ENCODE measurements at regions of chr7 and their contacts with region 1.

Region 1: DNA sequence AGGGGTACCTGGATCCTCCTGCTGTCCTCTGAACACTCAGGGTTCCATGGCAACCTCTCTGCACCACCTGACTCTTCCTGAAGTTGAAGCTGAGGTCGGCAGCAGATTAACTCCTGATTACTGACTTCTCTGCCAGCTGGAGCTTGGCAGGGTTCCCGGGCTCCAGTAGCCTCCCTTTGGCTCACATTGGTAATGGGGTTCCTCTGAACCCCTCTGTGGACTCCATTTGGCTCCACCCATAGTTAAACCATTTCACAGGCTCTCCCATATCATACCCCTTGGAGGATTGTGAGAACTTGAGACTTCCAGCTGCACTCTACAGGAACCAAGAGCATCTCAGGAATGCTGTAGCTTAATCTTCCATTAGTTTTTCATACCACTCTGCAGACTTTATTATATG is 292.5 kb downstream of the HDAC9 start:
- DNase-seq: peak; percentile 77
- H3K4me3 ChIP-seq: no peak overlapping the region
- H3K27ac ChIP-seq: peak overlapping the region; percentile 32
- H3K4me1 ChIP-seq: peaks cover 5% of the 10 kb centered on the region
- H3K27me3 ChIP-seq: no peaks in the 10 kb centered on the region
- CTCF ChIP-seq: no peak

Region 2: DNA sequence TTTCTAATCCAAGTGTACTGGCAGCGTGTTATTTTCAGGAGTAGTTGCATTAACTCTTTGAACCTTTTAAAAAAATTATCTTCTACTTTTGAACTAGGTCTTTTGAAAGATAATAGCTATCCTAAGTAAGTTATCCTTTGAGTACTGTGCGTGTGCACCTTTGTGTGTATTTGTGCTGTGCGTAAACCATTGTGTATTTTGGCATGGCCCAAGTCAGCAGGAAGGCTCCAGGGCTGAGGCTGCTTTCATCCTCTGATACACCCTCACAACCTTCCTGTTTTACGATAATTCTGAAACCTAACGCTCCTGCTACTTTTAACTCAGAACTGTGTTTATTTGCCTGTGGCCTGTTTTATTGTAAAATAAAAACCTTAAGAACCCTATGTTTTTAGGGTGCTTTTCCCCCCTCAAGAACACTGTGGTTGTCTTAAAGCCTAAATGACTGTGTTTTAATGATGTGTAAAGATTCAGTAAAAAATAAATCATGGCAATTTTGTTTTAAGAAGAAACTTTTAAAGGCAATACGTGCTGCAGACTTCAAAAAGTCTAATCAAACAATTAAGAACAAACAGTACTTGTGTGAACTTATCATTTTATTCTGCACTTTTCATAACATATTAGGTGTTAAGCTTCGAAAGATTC is 235.0 kb before region 1 on chr7:
- CTCF ChIA-PET with region 1: no interaction called
- POLR2A ChIA-PET with region 1: no interaction called
- intact Hi-C with region 1: loop called (anchors 5 kb)
- DNase-seq: no peak
- H3K4me3 ChIP-seq: no peak overlapping the region
- H3K27ac ChIP-seq: peak overlapping the region; percentile 55
- H3K4me1 ChIP-seq: peaks cover 45% of the 10 kb centered on the region
- H3K27me3 ChIP-seq: no peaks in the 10 kb centered on the region
- CTCF ChIP-seq: no peak

Region 3: GRCh38 chr7:18614841-18615240 is 173.2 kb before region 1 on chr7:
- CTCF ChIA-PET with region 1: no interaction called
- POLR2A ChIA-PET with region 1: no interaction called
- intact Hi-C with region 1: no loop called
- DNase-seq: no peak
- H3K4me3 ChIP-seq: no peak overlapping the region
- H3K27ac ChIP-seq: no peak overlapping the region
- H3K4me1 ChIP-seq: peaks cover 4% of the 10 kb centered on the region
- H3K27me3 ChIP-seq: no peaks in the 10 kb centered on the region
- CTCF ChIP-seq: no peak

Region 4: DNA sequence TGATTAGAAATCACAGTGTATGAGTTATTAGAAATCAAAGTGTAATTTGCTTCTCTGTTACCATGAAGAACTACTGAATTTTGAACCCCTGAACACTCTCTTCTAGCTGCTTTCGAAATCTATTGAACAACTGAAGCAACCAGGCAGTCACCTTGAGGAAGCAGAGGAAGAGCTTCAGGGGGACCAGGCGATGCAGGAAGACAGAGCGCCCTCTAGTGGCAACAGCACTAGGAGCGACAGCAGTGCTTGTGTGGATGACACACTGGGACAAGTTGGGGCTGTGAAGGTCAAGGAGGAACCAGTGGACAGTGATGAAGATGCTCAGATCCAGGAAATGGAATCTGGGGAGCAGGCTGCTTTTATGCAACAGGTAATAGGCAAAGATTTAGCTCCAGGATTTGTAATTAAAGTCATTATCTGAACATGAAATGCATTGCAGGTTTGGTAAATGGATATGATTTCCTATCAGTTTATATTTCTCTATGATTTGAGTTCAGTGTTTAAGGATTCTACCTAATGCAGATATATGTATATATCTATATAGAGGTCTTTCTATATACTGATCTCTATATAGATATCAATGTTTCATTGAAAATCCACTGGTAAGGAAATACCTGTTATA is 121.8 kb before region 1 on chr7:
- CTCF ChIA-PET with region 1: no interaction called
- POLR2A ChIA-PET with region 1: no interaction called
- intact Hi-C with region 1: loop called (anchors 5 kb)
- DNase-seq: peak; percentile 87
- H3K4me3 ChIP-seq: no peak overlapping the region
- H3K27ac ChIP-seq: peak overlapping the region; percentile 73
- H3K4me1 ChIP-seq: peaks cover 42% of the 10 kb centered on the region
- H3K27me3 ChIP-seq: no peaks in the 10 kb centered on the region
- CTCF ChIP-seq: peak; percentile 99

Region 5: GRCh38 chr7:19107356-19108146 is 319.5 kb after region 1 on chr7:
- CTCF ChIA-PET with region 1: no interaction called
- POLR2A ChIA-PET with region 1: no interaction called
- intact Hi-C with region 1: loop called (anchors 5 kb)
- DNase-seq: peak; percentile 76
- H3K4me3 ChIP-seq: peak overlapping the region; percentile 43
- H3K27ac ChIP-seq: peak overlapping the region; percentile 15
- H3K4me1 ChIP-seq: peaks cover 25% of the 10 kb centered on the region
- H3K27me3 ChIP-seq: no peaks in the 10 kb centered on the region
- CTCF ChIP-seq: no peak

Measured in A673 (cell line).